ENCODE measurements at regions of chr10 and their contacts with region 1.

Region 1: GRCh38 chr10:6678211-6678803 is 98.2 kb upstream of the PRKCQ start:
- ATAC-seq: peak in 4 of 8 experiments; percentile 40 to 72 (median 60)
- H3K4me3 ChIP-seq: no peak overlapping the region
- H3K27ac ChIP-seq: no peak overlapping the region
- H3K4me1 ChIP-seq: no peaks in the 10 kb centered on the region

Region 2: DNA sequence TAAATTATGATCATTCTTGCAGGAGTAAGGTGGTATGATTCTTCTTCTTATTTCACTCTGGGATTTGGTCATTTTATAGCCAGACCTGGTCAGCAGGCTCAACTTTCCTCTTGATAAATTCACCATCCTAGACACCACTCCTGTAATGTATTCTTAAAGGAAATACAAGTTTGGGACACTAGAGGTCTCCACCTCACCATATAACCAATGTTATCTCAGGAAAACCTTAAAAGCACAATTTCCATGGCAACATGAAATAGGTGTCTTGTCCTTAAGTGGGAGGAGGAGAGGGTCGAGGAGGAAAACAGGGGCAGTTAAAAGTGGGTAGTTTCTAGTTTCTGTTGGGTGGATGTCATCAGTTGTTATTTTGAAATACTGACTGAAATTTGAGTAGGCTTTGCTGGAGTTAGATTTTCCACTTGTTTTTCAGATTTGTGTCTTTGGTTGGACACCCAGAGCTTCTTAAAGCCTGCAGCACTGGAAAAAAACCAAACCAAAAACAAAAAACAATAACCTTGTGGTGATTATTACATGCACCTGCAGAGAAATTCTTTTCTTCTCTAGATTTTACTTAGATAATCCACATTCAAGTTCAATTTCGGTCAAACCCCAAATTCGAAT is 261.3 kb before region 1 on chr10:
- in situ Hi-C with region 1: loop called in 3 of 9 experiments (anchors 10 to 25 kb)
- ATAC-seq: peak; percentile 33 to 88 (median 72)
- H3K4me3 ChIP-seq: no peak overlapping the region
- H3K27ac ChIP-seq: no peak overlapping the region
- H3K4me1 ChIP-seq: no peaks in the 10 kb centered on the region

Region 3: DNA sequence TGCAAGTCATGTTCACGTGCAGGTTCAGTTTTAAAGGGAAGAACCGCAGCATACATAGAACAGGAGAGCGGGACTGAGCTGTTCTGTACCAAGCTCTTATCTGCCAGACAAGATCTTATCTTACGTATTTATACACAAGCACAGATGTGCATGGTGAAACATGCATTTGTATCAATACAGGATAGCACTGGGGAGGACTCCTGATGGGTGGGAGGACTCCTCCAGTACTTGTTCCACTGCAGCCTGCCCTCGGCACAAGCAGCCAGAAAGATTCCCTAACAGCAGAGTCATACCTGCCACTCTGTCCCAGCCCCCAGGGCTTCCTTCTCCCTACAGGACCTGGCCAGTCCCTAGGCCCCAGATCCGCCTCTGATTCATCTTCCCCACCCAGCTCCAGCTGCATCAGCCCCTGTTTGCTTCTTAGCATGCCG is 85.1 kb before region 1 on chr10:
- in situ Hi-C with region 1: no loop called
- ATAC-seq: peak in 1 of 8 experiments; percentile 90
- H3K4me3 ChIP-seq: no peak overlapping the region
- H3K27ac ChIP-seq: no peak overlapping the region
- H3K4me1 ChIP-seq: no peaks in the 10 kb centered on the region

Measured in motor neuron (in vitro differentiated cells).